Sciatic nerve (tissue), 2 donors: ENCODE measurements at regions of chr19 and their contacts with region 1.

Region 1: GRCh38 chr19:45484273-45484945 is 12.4 kb downstream of the RTN2 start:
- DNase-seq: no peak
- ATAC-seq: no peak

Region 2: GRCh38 chr19:44869733-44870470 is 614.5 kb before region 1 on chr19:
- intact Hi-C with region 1: loop called (anchors 5 kb)
- DNase-seq: peak; percentile 84
- ATAC-seq: peak; percentile 35

Region 3: GRCh38 chr19:45558399-45558878 is 74.0 kb after region 1 on chr19:
- intact Hi-C with region 1: no loop called
- DNase-seq: no peak
- ATAC-seq: peak; percentile 65